ENCODE measurements at regions of chr1 and their contacts with region 1.

Region 1: GRCh38 chr1:114979278-114979891 is 50.2 kb upstream of the TSHB start:
- DNase-seq: peak; percentile 36 to 67 (median 39)
- ATAC-seq: no peak
- H3K4me3 ChIP-seq: no peak overlapping the region
- H3K27ac ChIP-seq: no peak overlapping the region
- H3K4me1 ChIP-seq: no peaks in the 10 kb centered on the region
- H3K27me3 ChIP-seq: no peaks in the 10 kb centered on the region

Region 2: DNA sequence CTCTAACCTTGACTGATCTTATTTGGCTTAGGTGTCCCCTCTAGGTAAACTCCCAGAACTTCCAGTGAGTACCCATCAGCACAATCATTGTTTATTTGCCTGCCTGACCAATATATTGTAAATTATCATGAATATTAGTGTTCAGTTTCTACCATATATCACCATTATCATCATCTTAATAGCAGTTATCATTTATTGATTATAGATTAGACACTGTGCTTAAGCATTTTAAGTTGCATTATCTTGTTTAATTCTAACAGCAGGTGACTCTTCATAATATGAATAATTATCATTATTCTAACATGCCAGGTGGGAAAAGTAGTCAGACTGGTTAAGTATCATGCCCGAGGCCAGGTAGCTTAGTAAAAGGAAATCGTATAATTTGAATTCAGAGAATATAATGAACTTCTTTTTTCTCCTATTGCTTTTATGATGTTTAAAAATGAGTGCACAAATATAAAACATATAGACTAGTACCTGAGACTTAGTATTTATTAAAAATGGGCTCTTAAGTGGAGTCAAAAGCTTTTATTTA is 94.9 kb before region 1 on chr1:
- intact Hi-C with region 1: no loop called
- DNase-seq: no peak
- ATAC-seq: no peak
- H3K4me3 ChIP-seq: no peak overlapping the region
- H3K27ac ChIP-seq: no peak overlapping the region
- H3K4me1 ChIP-seq: no peaks in the 10 kb centered on the region
- H3K27me3 ChIP-seq: no peaks in the 10 kb centered on the region

Region 3: GRCh38 chr1:115052454-115053083 is 73.2 kb after region 1 on chr1:
- intact Hi-C with region 1: loop called in 1 of 4 experiments (anchors 5 kb)
- DNase-seq: peak in 2 of 3 donors; percentile 31 to 69
- ATAC-seq: peak; percentile 60 to 61
- H3K4me3 ChIP-seq: no peak overlapping the region
- H3K27ac ChIP-seq: no peak overlapping the region
- H3K4me1 ChIP-seq: peaks cover 4% of the 10 kb centered on the region
- H3K27me3 ChIP-seq: no peaks in the 10 kb centered on the region

Region 4: DNA sequence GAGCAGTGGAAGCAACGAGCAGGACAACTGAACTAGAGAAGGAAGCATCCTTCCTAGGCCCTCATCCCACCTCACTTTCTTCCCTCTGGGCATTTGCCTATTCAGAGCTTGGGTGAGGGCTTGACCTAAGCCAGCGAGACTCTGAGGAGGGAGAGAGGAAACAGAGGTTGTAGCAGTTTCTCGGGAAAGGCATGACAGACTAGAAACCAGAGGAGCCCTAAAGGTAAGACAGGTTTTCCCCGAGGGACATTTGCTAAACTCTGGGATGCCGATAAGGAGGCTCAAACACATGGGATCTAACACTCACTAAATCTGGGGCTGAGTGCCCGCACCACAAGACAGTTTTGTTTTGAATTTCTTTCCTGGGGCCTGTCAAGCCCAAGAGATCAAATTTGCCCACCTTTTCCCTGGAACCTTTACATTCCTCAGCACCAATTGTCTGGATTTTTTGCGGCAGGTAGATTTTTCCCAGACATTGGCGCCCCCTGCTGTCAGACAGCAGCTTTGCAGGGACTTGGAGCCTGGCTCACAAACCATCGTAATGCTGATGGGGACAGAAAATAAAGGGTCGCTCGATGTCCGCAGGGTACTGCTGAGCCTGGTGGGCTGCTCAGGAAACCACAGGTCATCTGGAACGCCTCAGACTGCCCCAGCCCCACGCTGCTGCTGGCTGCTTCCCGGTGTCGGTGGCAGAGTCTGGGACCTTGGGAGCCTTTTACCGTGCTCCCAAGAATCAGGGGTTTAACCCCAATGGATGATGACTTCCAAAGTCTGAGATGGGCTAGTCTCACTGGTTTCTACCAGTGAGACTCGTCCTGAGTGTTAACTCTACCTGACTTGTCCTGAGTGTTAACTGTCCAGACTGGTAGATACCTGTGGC is 133.4 kb after region 1 on chr1:
- intact Hi-C with region 1: loop called (anchors 2 kb)
- DNase-seq: peak; percentile 21 to 64 (median 57)
- ATAC-seq: peak; percentile 49 to 50
- H3K4me3 ChIP-seq: no peak overlapping the region
- H3K27ac ChIP-seq: no peak overlapping the region
- H3K4me1 ChIP-seq: no peaks in the 10 kb centered on the region
- H3K27me3 ChIP-seq: no peaks in the 10 kb centered on the region

Region 5: GRCh38 chr1:115251856-115252255 is 272.5 kb after region 1 on chr1:
- intact Hi-C with region 1: no loop called
- DNase-seq: no peak
- ATAC-seq: peak; percentile 77 to 84
- H3K4me3 ChIP-seq: no peak overlapping the region
- H3K27ac ChIP-seq: no peak overlapping the region
- H3K4me1 ChIP-seq: no peaks in the 10 kb centered on the region
- H3K27me3 ChIP-seq: no peaks in the 10 kb centered on the region

Region 6: GRCh38 chr1:115595279-115596079 is 616.1 kb after region 1 on chr1:
- intact Hi-C with region 1: loop called in 2 of 4 experiments (anchors 5 kb)
- DNase-seq: peak; percentile 94 to 97 (median 95)
- ATAC-seq: peak; percentile 94 to 97
- H3K4me3 ChIP-seq: no peak overlapping the region
- H3K27ac ChIP-seq: no peak overlapping the region
- H3K4me1 ChIP-seq: peaks cover 5% of the 10 kb centered on the region
- H3K27me3 ChIP-seq: no peaks in the 10 kb centered on the region

Measured in right cardiac atrium (tissue), 5 donors.